ENCODE measurements at regions of chr7 and their contacts with region 1.

Region 1: GRCh38 chr7:8217200-8218068 is 44.5 kb downstream of the ICA1 start:
- DNase-seq: peak; percentile 73
- ATAC-seq: peak; percentile 83
- H3K4me3 ChIP-seq: no peak overlapping the region
- H3K27ac ChIP-seq: no peak overlapping the region
- H3K4me1 ChIP-seq: no peaks in the 10 kb centered on the region
- H3K27me3 ChIP-seq: no peaks in the 10 kb centered on the region
- CTCF ChIP-seq: peak; percentile 70
- POLR2A ChIP-seq: no peak
- RAD21 ChIP-seq: peak; percentile 70

Region 2: GRCh38 chr7:7103343-7104313 is 1113.8 kb before region 1 on chr7:
- CTCF ChIA-PET with region 1: no interaction called
- POLR2A ChIA-PET with region 1: no interaction called
- dilution Hi-C with region 1: no loop called
- in situ Hi-C with region 1: loop called (anchors 25 kb)
- intact Hi-C with region 1: loop called (anchors 2 kb)
- DNase-seq: peak; percentile 74
- ATAC-seq: peak; percentile 53; the same call in 1 of the 2 replicates
- H3K4me3 ChIP-seq: no peak overlapping the region
- H3K27ac ChIP-seq: no peak overlapping the region
- H3K4me1 ChIP-seq: peaks cover 2% of the 10 kb centered on the region; the same call in 1 of the 2 replicates
- H3K27me3 ChIP-seq: no peaks in the 10 kb centered on the region
- CTCF ChIP-seq: peak; percentile 74
- POLR2A ChIP-seq: no peak
- RAD21 ChIP-seq: peak; percentile 74

Region 3: DNA sequence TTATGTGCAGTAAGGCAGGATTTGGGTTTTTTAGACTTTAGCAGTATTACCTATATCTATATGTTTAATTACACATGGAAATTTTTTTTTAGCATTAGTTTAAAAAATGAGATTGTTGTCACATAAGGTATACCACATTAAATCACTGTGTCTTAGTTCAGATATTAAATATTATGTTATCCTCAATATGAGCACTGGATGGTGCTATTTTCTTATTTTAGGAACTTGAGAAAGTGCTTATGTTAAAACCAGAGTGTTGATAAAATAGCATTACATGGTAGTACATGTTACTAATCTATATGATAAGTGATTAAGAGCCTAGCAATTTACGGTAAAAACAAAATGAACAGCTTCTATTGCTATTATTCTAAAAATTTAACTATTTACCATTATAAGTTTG is 622.0 kb before region 1 on chr7:
- CTCF ChIA-PET with region 1: no interaction called
- POLR2A ChIA-PET with region 1: no interaction called
- dilution Hi-C with region 1: no loop called
- in situ Hi-C with region 1: loop called (anchors 5 kb)
- intact Hi-C with region 1: loop called (anchors 1 kb)
- DNase-seq: peak; percentile 33
- ATAC-seq: peak; percentile 65; the same call in 1 of the 2 replicates
- H3K4me3 ChIP-seq: no peak overlapping the region
- H3K27ac ChIP-seq: no peak overlapping the region
- H3K4me1 ChIP-seq: no peaks in the 10 kb centered on the region
- H3K27me3 ChIP-seq: no peaks in the 10 kb centered on the region
- CTCF ChIP-seq: peak; percentile 50
- POLR2A ChIP-seq: no peak
- RAD21 ChIP-seq: peak; percentile 58

Region 4: GRCh38 chr7:7653593-7654187 is 563.7 kb before region 1 on chr7:
- CTCF ChIA-PET with region 1: no interaction called
- POLR2A ChIA-PET with region 1: no interaction called
- dilution Hi-C with region 1: no loop called
- in situ Hi-C with region 1: loop called (anchors 25 kb)
- intact Hi-C with region 1: no loop called
- DNase-seq: no peak
- ATAC-seq: no peak
- H3K4me3 ChIP-seq: no peak overlapping the region
- H3K27ac ChIP-seq: no peak overlapping the region
- H3K4me1 ChIP-seq: no peaks in the 10 kb centered on the region
- H3K27me3 ChIP-seq: no peaks in the 10 kb centered on the region
- CTCF ChIP-seq: peak; percentile 36; the same call in 1 of the 2 replicates
- POLR2A ChIP-seq: no peak
- RAD21 ChIP-seq: no peak

Region 5: GRCh38 chr7:7681179-7681935 is 536.1 kb before region 1 on chr7:
- CTCF ChIA-PET with region 1: interaction called, 4 read pairs
- POLR2A ChIA-PET with region 1: no interaction called
- dilution Hi-C with region 1: no loop called
- in situ Hi-C with region 1: no loop called
- intact Hi-C with region 1: loop called (anchors 1 kb)
- DNase-seq: peak; percentile 61
- ATAC-seq: peak; percentile 89
- H3K4me3 ChIP-seq: no peak overlapping the region
- H3K27ac ChIP-seq: no peak overlapping the region
- H3K4me1 ChIP-seq: no peaks in the 10 kb centered on the region
- H3K27me3 ChIP-seq: no peaks in the 10 kb centered on the region
- CTCF ChIP-seq: peak; percentile 76
- POLR2A ChIP-seq: no peak
- RAD21 ChIP-seq: peak; percentile 78

Measured in IMR-90 (cell line).